B cell (primary cell): ENCODE measurements at regions of chr19 and their contacts with region 1.

Region 1: GRCh38 chr19:12789904-12790619 is 1.2 kb upstream of the JUNB start:
- DNase-seq: peak; percentile 99
- ATAC-seq: peak; percentile 46
- H3K4me3 ChIP-seq: peak overlapping the region; percentile 94 to 99 (median 97)
- H3K4me3 Mint-ChIP-seq: peak overlapping the region; percentile 97
- H3K27ac ChIP-seq: peak overlapping the region; percentile 95 to 97
- H3K27ac Mint-ChIP-seq: peak overlapping the region; percentile 99
- H3K4me1 ChIP-seq: peaks cover 52 to 64% of the 10 kb centered on the region in 2 donors
- H3K4me1 Mint-ChIP-seq: peaks cover 41% of the 10 kb centered on the region
- H3K27me3 ChIP-seq: no peaks in the 10 kb centered on the region
- H3K27me3 Mint-ChIP-seq: no peaks in the 10 kb centered on the region
- CTCF ChIP-seq: no peak

Region 2: DNA sequence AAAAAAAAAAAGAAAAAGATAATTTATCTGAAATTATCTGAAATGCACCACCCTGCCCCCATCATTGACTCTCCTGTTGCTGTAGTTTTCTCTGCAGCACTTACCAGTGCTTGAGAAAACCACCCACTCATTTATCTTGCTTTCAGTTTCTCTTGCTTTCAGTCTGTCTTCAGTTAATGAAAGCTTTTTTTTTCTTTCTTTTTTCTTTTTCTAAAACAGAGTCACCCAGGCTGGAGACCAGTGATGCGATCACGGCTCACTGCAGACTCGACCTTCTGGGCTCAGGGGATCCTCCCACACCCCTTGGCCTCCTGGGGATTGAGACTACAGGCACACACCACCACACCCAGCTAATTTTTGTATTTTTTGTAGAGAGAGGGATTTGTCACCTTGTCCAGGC is 1208.3 kb before region 1 on chr19:
- CTCF ChIA-PET with region 1: no interaction called
- POLR2A ChIA-PET with region 1: no interaction called
- intact Hi-C with region 1: loop called (anchors 5 kb)
- DNase-seq: peak; percentile 93
- ATAC-seq: peak; percentile 85
- H3K4me3 ChIP-seq: peak overlapping the region in 4 of 5 experiments; percentile 8 to 58 (median 28)
- H3K4me3 Mint-ChIP-seq: peak overlapping the region; percentile 83
- H3K27ac ChIP-seq: peak overlapping the region; percentile 87 to 91
- H3K27ac Mint-ChIP-seq: peak overlapping the region; percentile 89
- H3K4me1 ChIP-seq: peaks cover 68 to 95% of the 10 kb centered on the region in 2 donors
- H3K4me1 Mint-ChIP-seq: peaks cover 67% of the 10 kb centered on the region
- H3K27me3 ChIP-seq: no peaks in the 10 kb centered on the region
- H3K27me3 Mint-ChIP-seq: no peaks in the 10 kb centered on the region
- CTCF ChIP-seq: no peak

Region 3: DNA sequence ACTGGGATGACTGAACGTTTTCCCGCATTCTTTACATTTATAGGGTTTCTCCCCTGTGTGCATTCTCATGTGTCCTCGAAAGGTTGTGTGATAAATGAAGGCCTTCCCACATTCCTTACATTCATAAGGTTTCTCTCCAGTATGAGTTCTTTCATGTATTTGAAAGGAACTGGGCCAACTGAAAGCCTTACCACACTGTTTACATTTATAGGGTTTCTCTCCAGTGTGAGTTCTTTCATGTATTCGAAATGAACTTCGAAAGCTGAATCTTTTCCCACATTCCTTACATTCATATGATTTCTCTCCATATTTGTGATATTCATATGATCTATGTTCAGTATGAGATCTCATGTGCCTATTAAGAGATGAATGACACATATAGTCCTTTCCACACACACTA is 324.9 kb before region 1 on chr19:
- CTCF ChIA-PET with region 1: no interaction called
- POLR2A ChIA-PET with region 1: no interaction called
- intact Hi-C with region 1: no loop called
- DNase-seq: no peak
- ATAC-seq: no peak
- H3K4me3 ChIP-seq: no peak overlapping the region
- H3K4me3 Mint-ChIP-seq: no peak overlapping the region
- H3K27ac ChIP-seq: no peak overlapping the region
- H3K27ac Mint-ChIP-seq: no peak overlapping the region
- H3K4me1 ChIP-seq: no peaks in the 10 kb centered on the region
- H3K4me1 Mint-ChIP-seq: no peaks in the 10 kb centered on the region
- H3K27me3 ChIP-seq: no peaks in the 10 kb centered on the region
- H3K27me3 Mint-ChIP-seq: no peaks in the 10 kb centered on the region
- CTCF ChIP-seq: no peak

Region 4: GRCh38 chr19:12777217-12778016 is 12.6 kb before region 1 on chr19:
- CTCF ChIA-PET with region 1: interaction called, 1,147 read pairs
- POLR2A ChIA-PET with region 1: interaction called, 233 read pairs
- intact Hi-C with region 1: loop called (anchors 1 kb)
- DNase-seq: peak; percentile 90
- ATAC-seq: peak; percentile 29
- H3K4me3 ChIP-seq: peak overlapping the region; percentile 63 to 89 (median 75)
- H3K4me3 Mint-ChIP-seq: peak overlapping the region; percentile 88
- H3K27ac ChIP-seq: peak overlapping the region; percentile 83 to 86
- H3K27ac Mint-ChIP-seq: peak overlapping the region; percentile 84
- H3K4me1 ChIP-seq: peaks cover 27 to 47% of the 10 kb centered on the region in 2 donors
- H3K4me1 Mint-ChIP-seq: peaks cover 48% of the 10 kb centered on the region
- H3K27me3 ChIP-seq: no peaks in the 10 kb centered on the region
- H3K27me3 Mint-ChIP-seq: no peaks in the 10 kb centered on the region
- CTCF ChIP-seq: peak; percentile 99

Region 5: DNA sequence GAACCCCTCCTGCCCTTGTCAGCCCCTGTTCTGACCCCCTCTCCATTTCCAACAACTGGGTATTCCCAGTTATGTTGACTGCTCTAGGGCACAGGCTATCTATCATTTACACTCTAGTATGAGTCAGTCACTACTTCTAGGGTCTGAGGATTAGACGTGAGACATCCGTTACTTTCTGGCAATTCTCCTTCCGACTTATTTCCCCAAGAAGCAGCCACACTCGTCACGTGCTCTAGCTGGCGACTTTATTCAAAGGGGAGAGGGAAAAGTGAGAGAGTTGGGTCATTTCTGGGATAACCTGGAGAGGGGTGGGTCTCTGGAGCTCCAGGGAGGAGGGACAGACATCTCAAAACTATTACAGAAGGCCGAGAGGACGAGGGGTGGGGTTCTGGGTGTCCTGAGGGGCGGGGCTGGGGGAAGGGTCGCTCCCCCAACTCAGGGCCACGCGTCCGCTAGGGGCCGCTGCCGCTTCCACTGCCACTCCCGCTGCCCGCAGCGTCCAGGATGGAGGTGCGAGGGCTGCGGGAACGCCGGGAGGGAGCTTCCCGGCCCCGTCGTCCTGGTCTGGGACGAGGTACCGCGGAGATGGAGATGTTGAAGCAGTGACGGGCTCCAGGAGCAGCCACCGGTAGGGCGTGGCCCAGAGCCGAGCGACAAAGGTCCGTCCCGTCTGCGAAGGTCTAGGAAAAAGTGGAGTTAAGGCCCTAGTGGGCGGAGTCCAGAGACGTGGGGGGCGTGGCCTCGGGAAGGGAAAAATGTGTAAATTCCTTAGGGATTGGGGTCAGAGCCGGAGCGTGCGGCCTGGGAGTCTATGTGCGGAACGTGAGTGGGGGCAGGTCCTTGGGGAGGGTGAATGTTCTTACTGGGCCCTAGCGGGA is 35.4 kb after region 1 on chr19:
- CTCF ChIA-PET with region 1: no interaction called
- POLR2A ChIA-PET with region 1: no interaction called
- intact Hi-C with region 1: no loop called
- DNase-seq: no peak
- ATAC-seq: no peak
- H3K4me3 ChIP-seq: no peak overlapping the region
- H3K4me3 Mint-ChIP-seq: no peak overlapping the region
- H3K27ac ChIP-seq: no peak overlapping the region
- H3K27ac Mint-ChIP-seq: no peak overlapping the region
- H3K4me1 ChIP-seq: peaks cover 10 to 14% of the 10 kb centered on the region in 2 donors
- H3K4me1 Mint-ChIP-seq: peaks cover 8% of the 10 kb centered on the region
- H3K27me3 ChIP-seq: peaks cover 0 to 62% (median 30%) of the 10 kb centered on the region in 4 experiments
- H3K27me3 Mint-ChIP-seq: peaks cover 40% of the 10 kb centered on the region
- CTCF ChIP-seq: peak; percentile 19

Region 6: GRCh38 chr19:12838182-12838885 is 48.3 kb after region 1 on chr19 and contains the start of gene MAST1:
- CTCF ChIA-PET with region 1: no interaction called
- POLR2A ChIA-PET with region 1: interaction called, 10 read pairs
- intact Hi-C with region 1: no loop called
- DNase-seq: peak; percentile 74
- ATAC-seq: peak; percentile 72
- H3K4me3 ChIP-seq: peak within 1 kb of the TSS in 3 of 5 experiments; percentile 12 to 57 (median 36)
- H3K4me3 Mint-ChIP-seq: peak within 1 kb of the TSS; percentile 75
- H3K27ac ChIP-seq: no peak within 1 kb of the TSS
- H3K27ac Mint-ChIP-seq: no peak within 1 kb of the TSS
- H3K4me1 ChIP-seq: peaks cover 43 to 56% of the 10 kb centered on the region in 2 donors
- H3K4me1 Mint-ChIP-seq: peaks cover 48% of the 10 kb centered on the region
- H3K27me3 ChIP-seq: peaks cover 6 to 93% (median 57%) of the 10 kb centered on the region in 4 experiments
- H3K27me3 Mint-ChIP-seq: peaks cover 65% of the 10 kb centered on the region
- CTCF ChIP-seq: peak; percentile 63
- total RNA-seq, gene MAST1: 0.39 and 1.2 TPM in 2 replicates

Region 7: GRCh38 chr19:13839130-13839937 is 1049.3 kb after region 1 on chr19:
- CTCF ChIA-PET with region 1: no interaction called
- POLR2A ChIA-PET with region 1: interaction called, 3 read pairs
- intact Hi-C with region 1: loop called (anchors 5 kb)
- DNase-seq: peak; percentile 82
- ATAC-seq: peak; percentile 44
- H3K4me3 ChIP-seq: peak overlapping the region; percentile 1 to 75 (median 62)
- H3K4me3 Mint-ChIP-seq: peak overlapping the region; percentile 88
- H3K27ac ChIP-seq: peak overlapping the region; percentile 93 to 94
- H3K27ac Mint-ChIP-seq: peak overlapping the region; percentile 95
- H3K4me1 ChIP-seq: peaks cover 76 to 83% of the 10 kb centered on the region in 2 donors
- H3K4me1 Mint-ChIP-seq: peaks cover 66% of the 10 kb centered on the region
- H3K27me3 ChIP-seq: no peaks in the 10 kb centered on the region
- H3K27me3 Mint-ChIP-seq: no peaks in the 10 kb centered on the region
- CTCF ChIP-seq: no peak